ENCODE measurements at regions of chr17 and their contacts with region 1.

Region 1: GRCh38 chr17:50094753-50095619 is at the start of gene PDK2:
- DNase-seq: peak; percentile 100
- H3K4me3 ChIP-seq: peak within 1 kb of the TSS; percentile 75 to 84
- H3K27ac ChIP-seq: peak within 1 kb of the TSS; percentile 64 to 83
- H3K4me1 ChIP-seq: peaks cover 3 to 18% of the 10 kb centered on the region in 2 experiments; a peak in 1 of 4 replicates
- H3K27me3 ChIP-seq: no peaks in the 10 kb centered on the region
- CTCF ChIP-seq: no peak
- EP300 ChIP-seq: peak in 1 of 2 experiments; percentile 5; a peak in 1 of 4 replicates
- RAD21 ChIP-seq: no peak
- polyA plus RNA-seq, gene PDK2: 96.1 and 124 TPM in 2 replicates

Region 2: GRCh38 chr17:50020841-50021599 is 74.0 kb before region 1 on chr17:
- CTCF ChIA-PET with region 1: interaction called, 221 read pairs
- POLR2A ChIA-PET with region 1: no interaction called
- DNase-seq: no peak
- H3K4me3 ChIP-seq: no peak overlapping the region
- H3K27ac ChIP-seq: no peak overlapping the region
- H3K4me1 ChIP-seq: peaks cover 0 to 2% of the 10 kb centered on the region in 2 experiments; a peak in 1 of 4 replicates
- H3K27me3 ChIP-seq: no peaks in the 10 kb centered on the region
- CTCF ChIP-seq: no peak
- EP300 ChIP-seq: no peak
- RAD21 ChIP-seq: no peak

Region 3: DNA sequence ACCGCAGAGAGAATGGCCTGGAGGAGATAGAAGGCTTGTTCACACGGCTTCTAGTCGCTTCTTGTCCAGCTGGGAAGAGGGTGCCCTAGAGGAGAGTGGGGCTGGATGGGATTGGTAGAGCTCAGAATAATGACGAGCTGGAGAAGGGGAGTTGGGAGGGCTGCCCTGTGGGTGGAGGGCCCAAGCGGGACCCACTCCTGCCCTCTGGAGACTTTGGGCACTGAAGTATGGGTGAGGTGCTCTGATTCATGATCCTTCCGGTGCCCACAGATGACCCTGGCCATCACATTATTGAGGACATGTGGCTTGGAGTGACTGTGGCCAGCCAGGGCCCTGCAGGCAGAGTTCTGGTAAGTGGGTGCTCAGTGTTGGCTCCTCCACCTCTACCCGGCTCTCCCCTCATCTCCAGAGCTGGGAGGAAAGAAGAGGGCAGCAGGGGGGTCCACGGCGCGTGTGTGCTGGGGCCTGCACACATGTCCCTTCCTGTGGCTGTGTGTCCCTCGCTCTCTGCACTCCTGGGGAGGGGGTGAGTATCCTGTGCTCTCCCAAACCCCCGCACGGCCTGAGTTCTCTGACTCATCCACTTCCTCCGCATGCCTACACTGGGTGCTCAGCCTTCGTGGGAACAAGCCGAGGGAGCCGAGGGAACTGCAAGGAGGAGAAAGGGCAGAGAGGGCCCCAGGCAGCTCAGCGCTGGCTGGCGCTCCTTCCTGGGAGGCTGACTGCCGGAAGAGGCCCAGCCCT is 30.6 kb before region 1 on chr17:
- CTCF ChIA-PET with region 1: interaction called, 44 read pairs
- POLR2A ChIA-PET with region 1: interaction called, 3 read pairs
- DNase-seq: peak; percentile 64
- H3K4me3 ChIP-seq: no peak overlapping the region
- H3K27ac ChIP-seq: peak overlapping the region; percentile 77 to 100
- H3K4me1 ChIP-seq: peaks cover 44 to 64% of the 10 kb centered on the region in 2 experiments
- H3K27me3 ChIP-seq: no peaks in the 10 kb centered on the region
- CTCF ChIP-seq: no peak
- EP300 ChIP-seq: peak in 1 of 2 experiments; percentile 89; a peak in 2 of 4 replicates
- RAD21 ChIP-seq: no peak

Region 4: GRCh38 chr17:50114849-50115357 is 19.9 kb after region 1 on chr17:
- CTCF ChIA-PET with region 1: interaction called, 297 read pairs
- POLR2A ChIA-PET with region 1: interaction called, 12 read pairs
- DNase-seq: peak; percentile 79
- H3K4me3 ChIP-seq: no peak overlapping the region
- H3K27ac ChIP-seq: no peak overlapping the region
- H3K4me1 ChIP-seq: peaks cover 0 to 24% of the 10 kb centered on the region in 2 experiments; a peak in 1 of 4 replicates
- H3K27me3 ChIP-seq: no peaks in the 10 kb centered on the region
- CTCF ChIP-seq: peak; percentile 93
- EP300 ChIP-seq: no peak
- RAD21 ChIP-seq: peak; percentile 75

Region 5: GRCh38 chr17:50139950-50140871 is 45.2 kb after region 1 on chr17:
- CTCF ChIA-PET with region 1: interaction called, 16 read pairs
- POLR2A ChIA-PET with region 1: no interaction called
- DNase-seq: peak; percentile 98
- H3K4me3 ChIP-seq: no peak overlapping the region; a peak in 1 of 4 replicates
- H3K27ac ChIP-seq: peak overlapping the region in 1 of 2 experiments; percentile 40; a peak in 2 of 4 replicates
- H3K4me1 ChIP-seq: peaks cover 0 to 7% of the 10 kb centered on the region in 2 experiments; a peak in 1 of 4 replicates
- H3K27me3 ChIP-seq: no peaks in the 10 kb centered on the region
- CTCF ChIP-seq: peak; percentile 96
- EP300 ChIP-seq: peak in 1 of 2 experiments; percentile 27; a peak in 1 of 4 replicates
- RAD21 ChIP-seq: peak; percentile 82

Region 6: DNA sequence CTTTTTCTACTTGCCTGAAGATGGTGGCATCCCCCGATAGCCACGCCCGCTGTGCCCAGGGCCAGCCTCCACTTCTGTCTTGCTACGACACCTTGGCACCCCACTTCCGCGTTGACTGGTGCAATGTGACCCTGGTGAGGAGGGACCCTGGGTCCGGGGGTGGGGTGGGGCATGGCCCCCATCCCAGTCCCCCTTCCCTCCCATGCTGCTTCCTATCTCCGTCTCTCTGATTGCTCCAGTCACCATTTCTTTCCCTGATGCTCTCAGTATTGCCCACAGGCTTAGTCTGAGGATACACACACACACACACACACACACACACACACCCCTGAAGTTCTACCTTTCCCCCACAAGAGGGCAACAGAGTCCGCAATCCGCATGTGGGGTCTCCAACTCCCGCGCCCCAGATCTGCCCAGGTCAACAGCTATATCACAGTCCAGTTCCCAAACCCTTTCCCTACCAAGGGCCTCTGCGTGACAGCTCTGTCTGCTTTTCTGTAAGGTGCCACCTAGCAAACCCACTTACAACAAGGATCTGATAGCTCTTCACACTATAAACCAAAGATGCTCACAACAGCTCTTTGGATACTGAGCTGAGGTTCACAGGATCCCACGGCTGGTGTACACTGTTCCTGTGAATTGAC is 74.3 kb after region 1 on chr17:
- CTCF ChIA-PET with region 1: interaction called, 25 read pairs
- POLR2A ChIA-PET with region 1: no interaction called
- DNase-seq: peak; percentile 90
- H3K4me3 ChIP-seq: no peak overlapping the region
- H3K27ac ChIP-seq: no peak overlapping the region
- H3K4me1 ChIP-seq: peaks cover 12 to 22% of the 10 kb centered on the region in 2 experiments
- H3K27me3 ChIP-seq: no peaks in the 10 kb centered on the region
- CTCF ChIP-seq: peak; percentile 99
- EP300 ChIP-seq: no peak; a peak in 1 of 4 replicates
- RAD21 ChIP-seq: peak; percentile 98

Measured in SK-N-SH (cell line).